Activated T-helper 2 cell treated with anti-CD3 and anti-CD28 coated beads, Interferon-gamma antibody, Interleukin-2, Interleukin-4, amounts not matched to agents 10 μg/mL and 5 μg/mL and 100 μg/mL, durations not matched to agents 14 hours and 24 hours and 36 hours (primary cell): ENCODE measurements at regions of chr10 and their contacts with region 1.

Region 1: DNA sequence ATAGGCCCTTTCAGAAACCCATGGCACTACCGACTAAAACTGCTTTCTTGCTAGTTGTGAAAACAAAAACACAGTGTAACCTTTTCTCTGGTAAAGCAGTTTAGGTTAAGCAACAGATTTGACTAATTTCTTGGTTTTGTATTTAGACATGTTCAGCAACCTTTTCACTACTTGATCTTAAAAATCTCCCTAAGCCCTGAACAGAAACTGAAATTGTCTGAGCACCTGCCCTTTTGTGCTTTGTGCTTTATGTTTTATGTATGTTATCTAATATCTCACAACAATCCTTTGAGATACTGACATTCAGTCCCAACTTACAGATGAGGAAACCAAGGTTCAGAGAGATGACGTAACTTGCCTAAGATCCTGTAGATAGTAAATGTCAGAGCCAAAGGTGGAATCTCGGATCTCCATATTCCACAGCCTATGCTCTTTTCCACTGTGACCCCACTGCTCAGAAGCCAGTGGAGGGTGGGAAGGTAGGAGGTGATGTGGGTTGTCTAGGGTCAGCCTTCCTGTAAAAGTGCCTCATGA is 146.6 kb downstream of the LCOR start:
- DNase-seq: no peak
- H3K4me3 Mint-ChIP-seq: peak overlapping the region; percentile 66
- H3K27ac Mint-ChIP-seq: peak overlapping the region; percentile 94
- H3K4me1 Mint-ChIP-seq: peaks cover 48% of the 10 kb centered on the region
- H3K27me3 Mint-ChIP-seq: no peaks in the 10 kb centered on the region

Region 2: GRCh38 chr10:96586419-96587263 is 392.0 kb before region 1 on chr10 and contains the start of gene TM9SF3:
- intact Hi-C with region 1: loop called (anchors 1 kb)
- DNase-seq: peak; percentile 87
- H3K4me3 Mint-ChIP-seq: peak within 1 kb of the TSS; percentile 95
- H3K27ac Mint-ChIP-seq: peak within 1 kb of the TSS; percentile 88
- H3K4me1 Mint-ChIP-seq: peaks cover 29% of the 10 kb centered on the region
- H3K27me3 Mint-ChIP-seq: peaks cover 10% of the 10 kb centered on the region
- total RNA-seq, gene TM9SF3: 81.3 and 82.3 TPM in 2 replicates

Region 3: DNA sequence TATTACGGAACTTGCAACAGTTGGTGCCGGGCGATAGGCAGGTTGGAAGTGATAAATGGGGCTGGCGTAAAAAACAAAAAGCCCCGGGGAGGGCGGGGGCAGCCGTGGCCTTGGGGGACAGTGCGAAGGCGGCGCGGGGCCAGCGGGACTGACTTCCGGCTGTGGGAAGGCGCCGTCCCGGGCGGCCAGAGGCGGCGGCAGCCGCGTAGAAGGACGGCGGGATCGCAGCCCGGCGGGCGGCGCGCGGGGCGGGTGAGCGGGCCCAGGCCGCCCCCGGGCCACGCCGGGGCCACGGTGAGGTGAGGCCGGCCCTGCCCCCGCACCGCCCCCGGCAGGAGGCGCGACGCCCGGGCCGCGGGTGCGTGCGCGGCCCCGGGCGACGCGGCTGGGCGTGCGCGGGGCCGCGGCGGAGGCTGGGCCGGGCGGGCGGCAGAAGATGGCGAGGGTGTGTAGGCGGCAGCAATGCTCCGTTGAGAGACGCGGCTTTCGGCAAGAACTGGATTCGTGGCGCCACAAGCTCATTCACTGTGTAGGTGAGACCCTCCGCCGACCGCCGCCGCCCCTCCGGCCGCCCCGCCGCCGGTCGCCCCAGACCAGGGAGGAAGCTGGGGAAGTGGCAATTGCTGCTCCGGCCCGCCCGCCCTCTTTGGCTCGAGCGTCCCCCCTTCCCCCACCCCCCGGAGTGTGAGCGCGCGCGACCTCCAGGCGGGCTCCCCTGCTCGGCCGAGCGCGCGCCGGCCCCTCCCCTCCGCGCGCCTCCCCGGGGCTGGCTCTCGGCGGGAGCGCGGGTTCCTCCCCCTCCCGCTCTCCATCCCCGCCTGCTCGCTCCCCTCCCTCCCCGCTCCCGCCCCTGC is 146.6 kb before region 1 on chr10 and contains the start of gene LCOR:
- intact Hi-C with region 1: loop called (anchors 2 kb)
- DNase-seq: peak; percentile 77
- H3K4me3 Mint-ChIP-seq: peak within 1 kb of the TSS; percentile 88
- H3K27ac Mint-ChIP-seq: peak within 1 kb of the TSS; percentile 94
- H3K4me1 Mint-ChIP-seq: peaks cover 40% of the 10 kb centered on the region
- H3K27me3 Mint-ChIP-seq: no peaks in the 10 kb centered on the region
- total RNA-seq, gene LCOR: 23.6 and 27.3 TPM in 2 replicates

Region 4: DNA sequence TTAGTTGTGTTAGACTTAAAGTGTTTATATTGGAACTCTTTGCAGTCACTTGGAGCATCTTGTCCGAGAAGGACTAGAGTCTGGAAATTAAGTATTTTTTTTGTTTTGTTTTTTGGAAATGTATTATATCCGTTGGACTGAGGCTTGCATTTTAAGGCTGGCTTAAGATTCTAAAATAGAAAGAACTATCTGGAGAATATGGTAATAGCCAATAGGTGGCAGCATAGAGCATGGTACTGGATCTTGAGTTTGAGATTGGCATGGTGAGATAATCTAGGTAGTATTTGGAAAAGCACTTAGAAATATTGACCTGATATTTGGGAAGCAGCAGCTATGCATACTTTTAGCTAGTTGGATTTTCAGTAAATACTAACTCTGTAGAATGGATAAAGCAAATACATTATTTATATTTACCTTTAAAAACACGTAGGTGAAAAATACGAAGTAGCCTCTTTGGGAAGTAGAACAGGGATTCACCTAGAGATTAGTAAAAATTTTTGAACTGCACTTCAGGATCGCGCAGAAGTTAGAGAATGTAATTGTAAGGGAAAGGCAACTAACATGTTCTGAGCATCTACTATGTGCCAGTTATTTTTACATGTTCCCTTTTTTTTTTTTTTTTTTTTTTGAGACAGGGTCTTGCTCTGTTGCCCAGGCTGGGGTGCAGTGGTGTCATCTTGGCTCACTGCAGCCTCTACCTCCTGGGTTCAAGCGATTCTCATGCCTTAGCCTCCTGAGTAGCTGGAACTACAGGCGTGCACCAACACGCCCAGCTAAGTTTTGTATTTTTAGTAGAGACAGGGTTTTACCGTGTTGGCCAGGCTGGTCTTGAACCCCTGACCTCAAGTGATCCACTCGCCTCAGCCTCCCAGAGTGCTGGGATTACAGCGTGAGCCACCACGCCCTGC is 67.9 kb before region 1 on chr10:
- intact Hi-C with region 1: loop called (anchors 5 kb)
- DNase-seq: no peak
- H3K4me3 Mint-ChIP-seq: no peak overlapping the region
- H3K27ac Mint-ChIP-seq: peak overlapping the region; percentile 29
- H3K4me1 Mint-ChIP-seq: peaks cover 17% of the 10 kb centered on the region
- H3K27me3 Mint-ChIP-seq: no peaks in the 10 kb centered on the region

Region 5: GRCh38 chr10:96960872-96961271 is 17.8 kb before region 1 on chr10:
- intact Hi-C with region 1: loop called (anchors 2 kb)
- DNase-seq: no peak
- H3K4me3 Mint-ChIP-seq: no peak overlapping the region
- H3K27ac Mint-ChIP-seq: peak overlapping the region; percentile 78
- H3K4me1 Mint-ChIP-seq: peaks cover 20% of the 10 kb centered on the region
- H3K27me3 Mint-ChIP-seq: no peaks in the 10 kb centered on the region

Region 6: GRCh38 chr10:97025613-97026242 is 47.0 kb after region 1 on chr10:
- intact Hi-C with region 1: loop called (anchors 2 kb)
- DNase-seq: peak; percentile 48
- H3K4me3 Mint-ChIP-seq: no peak overlapping the region
- H3K27ac Mint-ChIP-seq: no peak overlapping the region
- H3K4me1 Mint-ChIP-seq: peaks cover 6% of the 10 kb centered on the region
- H3K27me3 Mint-ChIP-seq: peaks cover 10% of the 10 kb centered on the region

Region 7: DNA sequence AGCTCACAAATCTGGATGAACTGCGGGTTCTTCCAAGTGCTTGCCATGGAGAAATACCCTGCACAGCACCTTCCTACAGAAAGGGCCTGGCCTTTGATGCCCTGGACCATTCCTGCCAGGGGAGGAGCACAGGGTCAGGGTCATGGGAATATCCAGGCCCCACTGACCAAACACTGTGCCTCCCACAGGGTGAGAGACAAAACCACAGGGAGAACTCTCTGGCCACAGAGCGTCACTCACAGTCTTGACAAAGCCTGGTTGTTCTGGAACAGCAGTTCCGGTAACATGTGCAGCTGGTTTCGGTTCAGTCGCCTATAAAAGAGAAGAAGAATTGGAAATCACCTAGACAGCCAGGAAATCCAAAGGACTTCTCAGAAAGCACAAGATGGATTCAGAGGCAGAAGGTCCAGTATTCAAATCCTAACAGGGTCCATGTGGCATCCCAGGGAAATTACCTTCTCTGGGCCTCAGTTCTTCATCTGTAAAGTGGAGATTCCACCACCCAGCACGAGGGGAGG is 178.9 kb after region 1 on chr10:
- intact Hi-C with region 1: no loop called
- DNase-seq: no peak
- H3K4me3 Mint-ChIP-seq: no peak overlapping the region
- H3K27ac Mint-ChIP-seq: no peak overlapping the region
- H3K4me1 Mint-ChIP-seq: no peaks in the 10 kb centered on the region
- H3K27me3 Mint-ChIP-seq: no peaks in the 10 kb centered on the region